Posterior vena cava (tissue), 2 donors: ENCODE measurements at regions of chr14 and their contacts with region 1.

Region 1: DNA sequence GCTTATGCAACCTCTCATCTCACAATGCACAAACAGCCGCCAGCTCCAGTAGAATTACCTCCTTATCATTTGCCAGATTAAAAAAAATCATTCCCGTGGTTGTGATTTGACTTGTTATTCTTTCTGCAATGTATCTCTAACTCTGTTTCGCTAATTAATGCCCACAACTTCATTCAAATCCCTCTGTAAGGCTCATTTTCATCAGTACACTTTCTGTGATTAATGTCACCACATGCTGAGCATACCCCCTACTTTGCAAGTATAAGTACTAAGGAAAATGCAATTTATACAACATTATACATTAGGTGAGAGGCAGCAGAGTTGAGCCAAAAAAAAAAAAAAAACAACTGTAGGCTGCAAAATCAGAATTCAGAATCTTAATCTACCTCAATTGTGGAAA is 166.0 kb downstream of the FSCB start:
- DNase-seq: no peak

Region 2: DNA sequence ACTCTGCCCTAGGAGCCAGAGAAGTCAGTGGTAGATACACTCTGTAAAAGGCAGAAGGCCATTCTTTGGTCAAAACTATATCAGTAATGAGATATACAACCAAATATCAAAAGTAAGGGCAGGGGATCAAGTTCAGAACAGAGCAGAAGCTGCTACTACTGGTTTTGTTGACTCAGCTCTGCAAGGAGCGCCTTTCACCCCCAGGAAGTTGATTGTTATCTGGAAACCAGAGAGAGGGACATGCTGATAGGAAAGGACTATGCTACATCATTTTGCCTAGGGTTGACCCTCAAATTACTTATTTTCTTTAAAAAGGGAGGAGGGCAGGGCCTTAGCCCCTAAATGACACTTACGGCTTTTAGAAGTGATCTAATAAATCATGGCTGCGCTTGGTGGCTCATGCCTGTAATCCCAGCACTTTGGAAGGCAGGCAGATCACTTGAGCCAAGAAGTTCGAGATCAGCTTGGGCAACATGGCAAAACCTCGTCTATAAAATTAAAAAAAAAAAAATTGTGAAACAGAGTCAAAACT is 426.6 kb after region 1 on chr14:
- intact Hi-C with region 1: loop called in 1 of 2 experiments (anchors 5 kb)
- DNase-seq: no peak

Region 3: DNA sequence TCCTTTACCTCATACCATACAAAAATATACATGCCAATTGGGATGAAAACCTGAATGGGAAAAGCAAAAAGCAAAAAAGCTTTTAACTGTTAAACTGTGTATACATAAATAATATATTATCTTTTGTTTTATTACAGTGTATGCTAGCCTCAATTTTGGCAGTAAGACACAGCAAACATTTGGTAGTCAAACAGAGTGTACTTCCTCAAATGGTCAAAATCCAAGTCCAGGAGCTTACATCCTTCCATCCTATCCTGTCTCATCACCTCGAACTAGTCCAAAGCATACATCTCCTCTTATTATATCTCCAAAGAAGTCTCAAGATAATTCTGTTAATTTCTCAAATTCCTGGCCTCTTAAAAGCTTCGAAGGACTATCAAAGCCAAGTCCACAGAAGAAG is 662.8 kb after region 1 on chr14:
- intact Hi-C with region 1: no loop called
- DNase-seq: no peak